ENCODE measurements at regions of chr3 and their contacts with region 1.

Region 1: DNA sequence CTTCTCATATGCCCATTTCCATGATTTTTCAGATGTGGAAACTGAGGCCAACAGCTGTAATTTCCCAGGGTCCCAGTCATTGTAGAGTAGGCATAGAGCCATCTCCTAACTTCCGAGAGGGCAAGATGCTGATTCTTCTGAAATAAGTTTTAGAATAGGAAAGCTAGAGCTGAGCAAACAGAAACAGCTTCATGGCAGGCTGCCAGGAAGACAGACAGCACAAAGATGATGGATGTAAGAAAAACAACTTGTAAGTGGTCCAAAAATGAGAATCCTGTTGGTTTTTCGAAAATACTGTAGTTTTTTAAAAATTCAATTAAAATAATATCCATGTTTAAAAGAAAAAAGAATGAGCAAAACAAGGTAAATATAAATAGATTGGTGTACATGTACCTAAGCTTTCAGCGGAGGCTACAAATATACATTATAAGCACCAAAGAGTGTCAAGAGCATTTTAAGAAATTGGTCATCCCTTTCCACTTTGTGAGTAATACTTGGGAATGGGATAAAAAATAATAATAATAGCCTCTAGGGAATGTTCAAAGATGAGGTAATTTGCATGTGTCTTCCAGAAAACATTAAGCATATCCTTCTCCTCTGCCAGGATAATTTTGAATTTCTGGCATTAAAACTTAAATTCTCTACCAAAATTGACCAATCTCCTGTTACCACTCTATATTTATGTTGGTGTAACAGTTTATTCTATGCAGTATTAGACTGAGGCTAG is 406.6 kb downstream of the MECOM start:
- DNase-seq: no peak
- H3K4me3 ChIP-seq: no peak overlapping the region
- H3K27ac ChIP-seq: no peak overlapping the region
- H3K4me1 ChIP-seq: no peaks in the 10 kb centered on the region
- H3K27me3 ChIP-seq: no peaks in the 10 kb centered on the region
- CTCF ChIP-seq: no peak

Region 2: DNA sequence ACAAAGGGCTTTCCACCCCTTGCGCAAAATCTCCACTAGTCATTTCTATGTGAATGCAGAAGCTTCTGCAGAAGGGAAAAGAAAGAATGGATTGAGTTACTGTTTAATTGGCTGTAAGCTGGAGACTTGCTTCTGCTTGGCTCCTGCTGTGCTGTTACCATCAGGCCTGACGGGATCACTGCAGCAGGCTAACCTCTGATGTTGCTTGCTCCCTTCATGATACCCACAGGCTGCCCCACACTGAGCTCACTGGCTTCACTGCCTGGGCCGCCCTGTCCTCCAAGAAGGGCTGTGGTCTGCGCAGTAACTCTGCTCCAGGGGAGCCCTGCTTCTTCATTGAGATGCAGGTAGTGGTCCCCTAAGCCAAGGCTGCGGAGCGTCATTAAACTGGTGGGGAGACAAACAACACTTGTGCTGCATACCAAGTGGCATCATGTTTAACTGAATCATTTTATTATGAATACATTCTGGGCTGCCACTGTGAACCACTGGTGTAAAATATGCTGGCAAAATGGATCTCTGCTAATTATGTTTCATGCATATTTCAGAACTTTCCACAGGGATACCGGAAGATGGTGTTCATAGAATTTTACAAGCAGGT is 1681.9 kb before region 1 on chr3:
- CTCF ChIA-PET with region 1: no interaction called
- POLR2A ChIA-PET with region 1: interaction called, 11 read pairs
- intact Hi-C with region 1: no loop called
- DNase-seq: no peak
- H3K4me3 ChIP-seq: no peak overlapping the region
- H3K27ac ChIP-seq: no peak overlapping the region
- H3K4me1 ChIP-seq: no peaks in the 10 kb centered on the region
- H3K27me3 ChIP-seq: no peaks in the 10 kb centered on the region
- CTCF ChIP-seq: no peak

Measured in PC-9 (cell line).